ENCODE measurements at regions of chr17 and their contacts with region 1.

Region 1: DNA sequence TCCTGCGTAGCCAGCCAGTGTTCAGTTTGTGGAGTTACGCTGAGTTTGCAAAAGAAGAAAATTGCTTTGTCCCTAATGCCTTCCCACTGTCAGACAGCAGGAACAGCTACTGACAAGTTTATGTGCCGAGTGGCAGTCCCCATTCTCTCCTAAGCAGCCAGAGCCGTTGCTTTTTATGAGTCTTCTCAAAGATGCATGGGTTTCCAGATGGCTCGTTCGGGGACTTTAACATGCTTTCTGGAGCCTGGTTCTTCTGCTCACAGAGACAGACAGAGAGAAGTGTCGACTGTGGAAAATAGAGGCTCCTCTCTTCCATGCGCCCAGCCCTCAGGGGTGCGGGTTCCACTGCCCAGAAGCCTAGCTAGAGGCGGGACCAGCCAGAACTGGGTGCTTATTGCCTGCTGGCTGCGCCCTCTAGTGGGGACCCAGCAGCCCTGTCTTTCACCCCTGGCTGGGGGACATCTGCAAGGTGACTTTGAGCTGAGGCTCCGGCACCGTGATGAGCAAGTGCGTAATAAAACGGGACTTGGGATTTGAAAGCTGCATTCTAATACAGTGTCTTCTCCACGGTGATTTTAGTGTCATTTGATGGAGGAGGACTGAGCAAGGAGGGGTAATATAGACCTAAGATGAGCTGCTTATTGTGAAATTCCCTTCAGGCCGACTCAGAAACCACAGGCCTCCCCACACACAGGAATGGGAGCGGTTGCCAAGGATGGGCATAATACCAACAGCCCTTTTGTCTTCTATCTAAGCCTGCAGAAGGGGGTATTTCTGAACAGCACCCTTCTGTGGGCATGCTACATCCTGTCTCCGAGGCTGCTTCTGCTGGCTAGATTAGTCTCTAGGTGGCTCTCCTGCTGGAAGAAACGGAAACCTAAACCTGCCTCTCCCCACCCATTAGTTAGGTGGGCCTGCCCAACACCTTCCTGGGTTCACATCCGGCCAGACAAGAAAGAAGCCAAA is 73.1 kb downstream of the CCDC182 start:
- DNase-seq: peak; percentile 82
- ATAC-seq: peak; percentile 92

Region 2: DNA sequence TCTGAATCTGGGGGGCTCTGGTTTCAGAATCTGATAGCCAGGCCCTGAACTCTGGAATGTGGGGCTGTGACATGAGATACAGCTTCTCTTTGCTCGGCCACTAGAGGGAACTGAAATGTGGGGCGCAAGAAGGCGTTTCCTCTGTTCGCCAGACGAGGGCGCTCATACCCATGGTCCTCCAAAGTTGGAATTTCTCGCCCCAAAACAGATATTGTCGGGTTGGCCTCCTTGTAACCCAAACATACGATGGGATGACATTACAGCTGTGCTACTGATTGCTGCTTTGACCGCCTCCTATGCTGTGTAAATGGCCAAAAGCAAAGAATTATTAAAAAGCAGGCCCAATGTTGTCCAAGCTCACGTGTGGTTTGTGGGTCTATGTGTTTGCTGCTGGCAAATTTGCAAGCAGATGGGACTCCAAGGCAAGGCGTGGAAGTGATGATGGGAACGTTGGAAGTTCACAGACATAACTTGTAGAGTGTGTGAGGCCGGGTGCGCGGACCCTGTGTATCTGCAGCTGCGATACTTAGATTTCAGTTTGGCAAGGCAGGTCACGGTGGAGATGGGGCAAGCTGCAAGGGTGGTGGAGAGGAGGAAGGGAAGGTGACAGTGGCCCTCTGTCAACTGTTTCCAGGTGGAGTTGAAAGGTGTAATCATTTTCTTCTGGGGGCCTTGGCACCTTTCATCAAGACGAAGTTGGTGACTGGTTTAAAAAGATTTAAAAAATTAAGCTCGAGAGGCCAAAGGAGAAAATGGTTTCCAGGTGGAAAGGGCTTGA is 428.6 kb before region 1 on chr17:
- intact Hi-C with region 1: loop called (anchors 5 kb)
- DNase-seq: peak; percentile 71
- ATAC-seq: peak; percentile 83

Measured in left ventricle myocardium superior (tissue), 1 donor.